Astrocyte of the cerebellum (primary cell): ENCODE measurements at regions of chr13 and their contacts with region 1.

Region 1: DNA sequence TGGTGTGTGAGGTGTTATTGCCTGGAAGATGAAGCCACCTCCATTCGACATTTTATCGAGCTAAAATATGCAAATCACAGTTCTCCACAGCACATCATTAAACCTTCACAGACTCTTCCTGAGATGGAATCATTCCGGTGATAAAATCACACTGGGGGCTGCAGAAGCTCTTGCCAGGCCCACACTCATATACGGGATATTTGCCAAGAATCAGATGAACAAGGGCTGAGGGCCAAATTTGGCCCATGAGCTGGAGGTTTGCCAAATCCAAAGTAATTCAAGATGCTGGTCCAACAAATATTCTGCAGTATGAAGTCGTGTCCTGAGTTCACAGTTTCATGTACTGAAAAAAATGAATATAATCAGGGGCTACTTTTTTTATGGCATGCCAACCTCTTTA is 16.7 kb upstream of the RXFP2 start:
- DNase-seq: peak; percentile 5
- H3K4me3 ChIP-seq: no peak overlapping the region
- CTCF ChIP-seq: no peak

Region 2: GRCh38 chr13:31431722-31432137 is 290.9 kb before region 1 on chr13:
- in situ Hi-C with region 1: loop called (anchors 10 kb)
- DNase-seq: peak; percentile 15
- H3K4me3 ChIP-seq: no peak overlapping the region
- CTCF ChIP-seq: peak; percentile 79

Region 3: GRCh38 chr13:31835932-31836331 is 113.3 kb after region 1 on chr13:
- in situ Hi-C with region 1: no loop called
- DNase-seq: peak; percentile 26
- H3K4me3 ChIP-seq: no peak overlapping the region
- CTCF ChIP-seq: no peak